GM13977 (cell line): ENCODE measurements at regions of chr12 and their contacts with region 1.

Region 1: GRCh38 chr12:115916910-115917668 is 360.4 kb downstream of the MED13L start:
- DNase-seq: peak; percentile 86
- CTCF ChIP-seq: peak; percentile 97

Region 2: DNA sequence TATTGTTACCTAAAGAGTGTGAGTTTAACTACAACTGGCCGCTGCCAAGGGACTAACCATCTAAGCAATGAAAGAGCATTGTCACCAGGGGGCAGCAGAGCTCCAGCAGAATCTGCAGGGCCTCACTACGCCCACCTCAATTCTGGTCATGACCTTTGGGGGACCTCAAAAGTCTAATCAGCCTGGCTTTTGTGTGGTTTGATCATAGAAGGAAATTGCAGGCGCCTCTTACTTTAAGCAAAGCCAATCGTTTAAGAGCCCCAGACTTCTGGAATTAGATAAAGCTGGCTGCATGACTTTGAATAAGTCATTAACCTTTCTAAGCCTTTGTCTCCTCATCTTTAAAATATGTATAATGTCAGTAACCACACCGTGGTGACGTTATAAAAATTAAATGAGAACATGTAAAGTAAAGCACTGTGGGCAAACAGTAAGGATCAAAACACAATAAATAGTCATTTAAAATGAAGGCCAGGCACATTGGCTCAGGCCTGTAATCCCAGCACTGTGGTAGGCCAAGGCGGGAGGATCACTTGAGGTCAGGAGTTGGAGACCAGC is 1291.7 kb before region 1 on chr12:
- in situ Hi-C with region 1: loop called (anchors 25 kb)
- DNase-seq: peak; percentile 50
- CTCF ChIP-seq: peak; percentile 77

Region 3: GRCh38 chr12:115973968-115974724 is 57.1 kb after region 1 on chr12:
- in situ Hi-C with region 1: no loop called
- DNase-seq: no peak
- CTCF ChIP-seq: no peak